ENCODE measurements at regions of chr17 and their contacts with region 1.

Region 1: GRCh38 chr17:57440522-57441485 is 184.5 kb downstream of the MSI2 start:
- DNase-seq: peak; percentile 63
- ATAC-seq: peak; percentile 79
- H3K4me3 ChIP-seq: peak overlapping the region; percentile 17; the same call in 1 of the 2 replicates
- H3K27ac ChIP-seq: peak overlapping the region; percentile 92
- H3K4me1 ChIP-seq: peaks cover 58% of the 10 kb centered on the region
- H3K27me3 ChIP-seq: no peaks in the 10 kb centered on the region
- CTCF ChIP-seq: peak; percentile 44 to 71 (median 69)
- EP300 ChIP-seq: peak; percentile 75 to 76; a peak in 2 of 4 replicates
- POLR2A ChIP-seq: no peak; the same call in 1 of the 2 replicates
- RAD21 ChIP-seq: no peak

Region 2: GRCh38 chr17:57067162-57067561 is 373.6 kb before region 1 on chr17:
- CTCF ChIA-PET with region 1: no interaction called
- POLR2A ChIA-PET with region 1: no interaction called
- RAD21 ChIA-PET with region 1: no interaction called
- SMC1A ChIA-PET with region 1: no interaction called
- in situ Hi-C with region 1: no loop called
- intact Hi-C with region 1: no loop called
- DNase-seq: no peak
- ATAC-seq: no peak
- H3K4me3 ChIP-seq: no peak overlapping the region
- H3K27ac ChIP-seq: no peak overlapping the region
- H3K4me1 ChIP-seq: no peaks in the 10 kb centered on the region
- H3K27me3 ChIP-seq: no peaks in the 10 kb centered on the region
- CTCF ChIP-seq: no peak
- EP300 ChIP-seq: no peak
- POLR2A ChIP-seq: no peak
- RAD21 ChIP-seq: no peak

Region 3: GRCh38 chr17:57114085-57114673 is 326.6 kb before region 1 on chr17:
- CTCF ChIA-PET with region 1: no interaction called
- POLR2A ChIA-PET with region 1: no interaction called
- RAD21 ChIA-PET with region 1: no interaction called
- SMC1A ChIA-PET with region 1: no interaction called
- in situ Hi-C with region 1: no loop called
- intact Hi-C with region 1: no loop called
- DNase-seq: no peak
- ATAC-seq: peak; percentile 92
- H3K4me3 ChIP-seq: no peak overlapping the region
- H3K27ac ChIP-seq: no peak overlapping the region
- H3K4me1 ChIP-seq: no peaks in the 10 kb centered on the region
- H3K27me3 ChIP-seq: no peaks in the 10 kb centered on the region
- CTCF ChIP-seq: peak; percentile 84 to 93 (median 89)
- EP300 ChIP-seq: no peak
- POLR2A ChIP-seq: no peak
- RAD21 ChIP-seq: peak; percentile 76

Region 4: GRCh38 chr17:57221366-57222350 is 219.1 kb before region 1 on chr17:
- CTCF ChIA-PET with region 1: no interaction called
- POLR2A ChIA-PET with region 1: no interaction called
- RAD21 ChIA-PET with region 1: no interaction called
- SMC1A ChIA-PET with region 1: no interaction called
- in situ Hi-C with region 1: no loop called
- intact Hi-C with region 1: no loop called
- DNase-seq: no peak
- ATAC-seq: no peak
- H3K4me3 ChIP-seq: no peak overlapping the region
- H3K27ac ChIP-seq: no peak overlapping the region
- H3K4me1 ChIP-seq: no peaks in the 10 kb centered on the region
- H3K27me3 ChIP-seq: no peaks in the 10 kb centered on the region
- CTCF ChIP-seq: no peak
- EP300 ChIP-seq: no peak
- POLR2A ChIP-seq: no peak
- RAD21 ChIP-seq: no peak

Region 5: GRCh38 chr17:57255776-57256681 is 184.8 kb before region 1 on chr17 and contains the start of gene MSI2:
- CTCF ChIA-PET with region 1: interaction called, 44 read pairs
- POLR2A ChIA-PET with region 1: interaction called, 3 read pairs
- RAD21 ChIA-PET with region 1: interaction called, 12 read pairs
- SMC1A ChIA-PET with region 1: interaction called, 10 read pairs
- in situ Hi-C with region 1: no loop called
- intact Hi-C with region 1: loop called (anchors 5 kb)
- DNase-seq: peak; percentile 51
- ATAC-seq: peak; percentile 82
- H3K4me3 ChIP-seq: peak within 1 kb of the TSS; percentile 95
- H3K27ac ChIP-seq: peak within 1 kb of the TSS; percentile 34
- H3K4me1 ChIP-seq: peaks cover 6% of the 10 kb centered on the region
- H3K27me3 ChIP-seq: no peaks in the 10 kb centered on the region
- CTCF ChIP-seq: no peak
- EP300 ChIP-seq: no peak
- POLR2A ChIP-seq: no peak
- RAD21 ChIP-seq: no peak
- polyA plus RNA-seq, gene MSI2: 6.1 to 9.5 TPM

Region 6: DNA sequence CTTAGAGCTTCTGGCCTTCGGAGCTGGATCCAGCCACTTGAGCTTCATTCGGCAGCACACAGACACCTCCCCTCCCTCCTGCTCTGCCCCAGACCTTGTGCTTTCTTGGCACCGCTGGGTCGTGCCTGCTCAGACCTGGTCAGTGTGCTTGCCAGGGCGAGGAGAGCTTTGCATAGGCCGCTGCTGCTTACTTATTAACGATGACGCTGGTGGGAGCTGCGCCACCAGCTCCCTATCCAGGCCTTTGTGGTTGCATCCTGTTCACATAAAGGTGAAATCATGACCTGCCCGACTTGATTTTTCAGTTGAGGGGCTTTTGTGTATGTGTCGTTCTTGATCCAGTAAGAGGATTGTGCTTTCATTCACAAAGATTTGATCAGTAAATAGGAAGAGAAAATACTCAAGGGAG is 83.4 kb before region 1 on chr17:
- CTCF ChIA-PET with region 1: interaction called, 27 read pairs
- POLR2A ChIA-PET with region 1: interaction called, 3 read pairs
- RAD21 ChIA-PET with region 1: interaction called, 31 read pairs
- SMC1A ChIA-PET with region 1: interaction called, 39 read pairs
- in situ Hi-C with region 1: no loop called
- intact Hi-C with region 1: loop called (anchors 5 kb)
- DNase-seq: no peak
- ATAC-seq: peak; percentile 81
- H3K4me3 ChIP-seq: peak overlapping the region; percentile 40
- H3K27ac ChIP-seq: peak overlapping the region; percentile 96
- H3K4me1 ChIP-seq: peaks cover 59% of the 10 kb centered on the region
- H3K27me3 ChIP-seq: no peaks in the 10 kb centered on the region
- CTCF ChIP-seq: no peak
- EP300 ChIP-seq: no peak; a peak in 1 of 4 replicates
- POLR2A ChIP-seq: peak; percentile 68
- RAD21 ChIP-seq: no peak

Region 7: GRCh38 chr17:57401556-57402488 is 39.0 kb before region 1 on chr17:
- CTCF ChIA-PET with region 1: interaction called, 28 read pairs
- POLR2A ChIA-PET with region 1: interaction called, 9 read pairs
- RAD21 ChIA-PET with region 1: interaction called, 12 read pairs
- SMC1A ChIA-PET with region 1: interaction called, 21 read pairs
- in situ Hi-C with region 1: no loop called
- intact Hi-C with region 1: no loop called
- DNase-seq: no peak
- ATAC-seq: peak; percentile 38; the same call in 2 of the 3 replicates
- H3K4me3 ChIP-seq: no peak overlapping the region
- H3K27ac ChIP-seq: no peak overlapping the region
- H3K4me1 ChIP-seq: no peaks in the 10 kb centered on the region
- H3K27me3 ChIP-seq: no peaks in the 10 kb centered on the region
- CTCF ChIP-seq: peak; percentile 18 to 26 (median 20); a peak in 3 of 6 replicates
- EP300 ChIP-seq: no peak
- POLR2A ChIP-seq: no peak
- RAD21 ChIP-seq: peak; percentile 51

Region 8: DNA sequence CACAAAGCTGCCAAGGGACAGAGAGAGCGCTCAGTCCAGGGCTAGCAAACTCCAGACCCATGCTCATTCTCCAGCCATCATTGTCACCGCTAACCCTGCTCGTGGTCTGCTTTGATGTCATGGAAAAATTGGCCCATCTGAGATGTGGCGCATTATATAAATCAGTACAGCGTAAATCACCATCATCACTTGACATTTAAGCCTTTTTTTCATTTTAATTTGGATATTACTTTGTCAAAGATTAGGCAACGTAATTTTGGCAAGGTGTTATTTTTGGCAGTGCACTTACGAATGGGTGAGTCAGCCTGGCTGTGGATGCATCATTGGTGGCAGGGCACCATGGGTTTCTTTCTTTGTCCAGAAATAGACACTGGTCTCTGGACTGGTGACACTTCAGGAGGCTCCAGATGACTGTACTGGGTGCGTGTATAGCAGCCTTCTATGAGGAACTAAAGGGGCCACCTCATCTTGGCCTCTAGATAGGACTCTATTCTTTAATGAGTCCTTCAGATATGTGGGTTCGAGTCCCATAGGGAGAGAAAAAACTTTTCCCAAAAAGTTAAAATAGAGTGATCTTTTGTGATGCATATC is 18.1 kb before region 1 on chr17:
- CTCF ChIA-PET with region 1: interaction called, 23 read pairs
- POLR2A ChIA-PET with region 1: interaction called, 3 read pairs
- RAD21 ChIA-PET with region 1: interaction called, 16 read pairs
- SMC1A ChIA-PET with region 1: interaction called, 53 read pairs
- in situ Hi-C with region 1: no loop called
- intact Hi-C with region 1: no loop called
- DNase-seq: peak; percentile 77
- ATAC-seq: peak; percentile 95
- H3K4me3 ChIP-seq: no peak overlapping the region
- H3K27ac ChIP-seq: peak overlapping the region; percentile 59
- H3K4me1 ChIP-seq: peaks cover 69% of the 10 kb centered on the region
- H3K27me3 ChIP-seq: no peaks in the 10 kb centered on the region
- CTCF ChIP-seq: no peak
- EP300 ChIP-seq: peak in 1 of 2 experiments; percentile 26; a peak in 2 of 4 replicates
- POLR2A ChIP-seq: no peak
- RAD21 ChIP-seq: peak; percentile 14; the same call in 1 of the 2 replicates

Region 9: GRCh38 chr17:57463103-57463851 is 22.5 kb after region 1 on chr17:
- CTCF ChIA-PET with region 1: interaction called, 16 read pairs
- POLR2A ChIA-PET with region 1: interaction called, 9 read pairs
- RAD21 ChIA-PET with region 1: interaction called, 24 read pairs
- SMC1A ChIA-PET with region 1: interaction called, 24 read pairs
- in situ Hi-C with region 1: no loop called
- intact Hi-C with region 1: no loop called
- DNase-seq: peak; percentile 97
- ATAC-seq: peak; percentile 91
- H3K4me3 ChIP-seq: peak overlapping the region; percentile 55
- H3K27ac ChIP-seq: peak overlapping the region; percentile 99
- H3K4me1 ChIP-seq: peaks cover 91% of the 10 kb centered on the region
- H3K27me3 ChIP-seq: no peaks in the 10 kb centered on the region
- CTCF ChIP-seq: no peak
- EP300 ChIP-seq: peak; percentile 95 to 96
- POLR2A ChIP-seq: peak; percentile 75
- RAD21 ChIP-seq: no peak

Region 10: GRCh38 chr17:57671667-57672632 is 231.1 kb after region 1 on chr17:
- CTCF ChIA-PET with region 1: interaction called, 18 read pairs
- POLR2A ChIA-PET with region 1: interaction called, 3 read pairs
- RAD21 ChIA-PET with region 1: interaction called, 22 read pairs
- SMC1A ChIA-PET with region 1: interaction called, 13 read pairs
- in situ Hi-C with region 1: no loop called
- intact Hi-C with region 1: no loop called
- DNase-seq: no peak
- ATAC-seq: peak; percentile 100
- H3K4me3 ChIP-seq: no peak overlapping the region
- H3K27ac ChIP-seq: no peak overlapping the region
- H3K4me1 ChIP-seq: peaks cover 4% of the 10 kb centered on the region; the same call in 1 of the 2 replicates
- H3K27me3 ChIP-seq: no peaks in the 10 kb centered on the region
- CTCF ChIP-seq: peak; percentile 90 to 95 (median 93)
- EP300 ChIP-seq: no peak
- POLR2A ChIP-seq: no peak
- RAD21 ChIP-seq: peak; percentile 82